ENCODE measurements at regions of chr11 and their contacts with region 1.

Region 1: DNA sequence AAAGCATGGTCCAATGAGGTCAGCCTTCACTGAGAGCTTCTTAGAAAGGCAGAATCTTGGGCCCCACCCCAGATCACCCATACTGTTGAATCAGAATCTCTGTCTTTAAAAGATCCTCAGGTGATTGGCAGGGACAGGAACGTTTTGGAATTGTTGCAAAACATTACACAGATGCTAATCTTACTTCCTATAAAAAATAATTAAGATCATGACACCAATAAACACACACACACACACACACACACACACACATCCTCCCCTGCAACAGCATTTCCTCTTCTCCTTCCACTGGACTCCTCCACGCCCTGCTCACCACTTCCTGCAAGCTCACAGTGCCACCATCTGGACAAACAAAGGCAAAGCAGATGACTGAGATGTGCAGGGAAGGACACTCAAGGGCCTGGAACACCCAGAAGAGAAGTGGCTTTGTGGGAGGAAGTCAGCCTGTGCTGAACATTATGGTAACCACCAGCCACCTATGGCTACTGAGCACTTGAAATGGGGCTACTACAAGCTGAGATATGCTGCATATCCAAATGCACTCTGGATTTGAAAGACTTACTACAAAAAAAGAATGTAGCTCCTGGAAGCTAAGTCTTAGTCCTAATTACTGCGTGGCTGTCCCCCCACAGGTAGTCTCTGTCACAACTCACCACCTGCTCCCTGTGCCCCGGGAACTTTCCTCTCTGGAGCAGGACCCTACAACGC is 65.6 kb downstream of the BTG4 start:
- DNase-seq: peak; percentile 83 to 90 (median 87)
- H3K4me3 ChIP-seq: no peak overlapping the region
- H3K4me3 Mint-ChIP-seq: peak overlapping the region in 4 of 8 donors; percentile 17 to 75 (median 42)
- H3K27ac ChIP-seq: no peak overlapping the region
- H3K27ac Mint-ChIP-seq: peak overlapping the region; percentile 48 to 95 (median 88)
- H3K4me1 ChIP-seq: peaks cover 18% of the 10 kb centered on the region
- H3K4me1 Mint-ChIP-seq: peaks cover 11 to 20% (median 16%) of the 10 kb centered on the region in 4 donors
- H3K27me3 ChIP-seq: no peaks in the 10 kb centered on the region
- H3K27me3 Mint-ChIP-seq: no peaks in the 10 kb centered on the region

Region 2: DNA sequence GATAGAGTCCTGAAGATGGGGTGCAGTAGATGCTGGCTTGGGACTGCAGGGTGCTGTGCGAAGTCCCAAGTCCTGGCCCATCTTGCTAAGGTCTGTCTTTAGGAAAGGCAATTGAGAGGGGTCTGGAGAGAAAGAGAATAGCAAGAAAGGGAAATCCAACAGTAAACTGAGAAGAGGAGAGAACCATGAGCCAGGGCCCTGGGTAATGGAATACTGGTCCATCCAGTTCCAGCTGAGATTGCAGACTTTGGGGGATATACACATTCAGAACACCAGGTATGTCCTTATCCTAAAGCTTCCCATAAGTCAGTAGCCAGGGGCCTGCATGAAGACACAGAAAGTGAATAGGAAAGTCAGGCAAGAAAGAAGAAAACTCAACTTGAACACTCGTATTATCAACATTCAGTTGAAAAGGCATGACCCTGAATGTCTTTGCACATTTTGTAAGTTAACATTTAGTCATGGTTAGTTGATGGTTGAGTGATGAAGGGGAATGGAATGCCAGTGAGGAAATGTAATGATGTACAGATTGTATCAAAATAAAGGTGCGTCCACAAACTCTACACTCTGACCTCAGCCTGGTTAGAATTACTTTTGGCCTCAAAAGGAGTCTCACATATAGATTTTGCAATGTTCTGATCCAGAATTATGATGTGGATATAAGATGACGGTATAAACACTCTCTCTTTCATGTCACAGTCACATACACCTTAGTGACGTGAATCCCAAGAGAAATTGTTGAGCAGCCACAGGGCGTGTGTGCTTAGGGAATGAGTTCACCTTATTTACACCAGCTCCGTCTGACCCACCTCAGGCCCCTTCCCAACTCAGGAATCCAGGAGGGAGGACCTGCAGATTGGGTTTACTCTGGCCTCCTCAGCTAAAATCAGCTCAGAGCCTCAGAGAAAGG is 1250.5 kb before region 1 on chr11:
- CTCF ChIA-PET with region 1: no interaction called
- POLR2A ChIA-PET with region 1: no interaction called
- intact Hi-C with region 1: loop called (anchors 10 kb)
- DNase-seq: no peak
- H3K4me3 ChIP-seq: no peak overlapping the region
- H3K4me3 Mint-ChIP-seq: no peak overlapping the region
- H3K27ac ChIP-seq: no peak overlapping the region
- H3K27ac Mint-ChIP-seq: no peak overlapping the region
- H3K4me1 ChIP-seq: peaks cover 12% of the 10 kb centered on the region
- H3K4me1 Mint-ChIP-seq: peaks cover 10 to 19% (median 12%) of the 10 kb centered on the region in 4 donors
- H3K27me3 ChIP-seq: no peaks in the 10 kb centered on the region
- H3K27me3 Mint-ChIP-seq: no peaks in the 10 kb centered on the region

Region 3: DNA sequence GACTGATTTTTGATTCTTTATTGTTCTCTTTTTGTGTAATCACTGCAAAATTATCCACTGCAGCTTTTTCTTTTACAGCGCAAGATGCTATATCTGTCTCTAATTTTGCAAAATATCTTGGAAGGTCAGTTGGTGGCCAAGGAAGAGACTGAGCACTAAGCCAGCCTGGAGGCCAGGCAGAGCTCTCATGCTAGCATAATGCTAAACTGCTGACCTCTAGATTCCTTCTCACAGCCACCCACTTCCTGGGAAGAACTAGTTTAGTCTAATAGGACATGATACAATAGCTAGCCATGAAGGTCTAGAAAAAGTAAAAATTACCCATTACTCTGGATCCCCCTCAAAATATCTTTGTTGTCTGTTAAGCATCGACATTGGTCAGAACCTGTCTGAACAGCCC is 507.1 kb before region 1 on chr11:
- CTCF ChIA-PET with region 1: no interaction called
- POLR2A ChIA-PET with region 1: no interaction called
- intact Hi-C with region 1: no loop called
- DNase-seq: no peak
- H3K4me3 ChIP-seq: no peak overlapping the region
- H3K4me3 Mint-ChIP-seq: no peak overlapping the region
- H3K27ac ChIP-seq: no peak overlapping the region
- H3K27ac Mint-ChIP-seq: no peak overlapping the region
- H3K4me1 ChIP-seq: no peaks in the 10 kb centered on the region
- H3K4me1 Mint-ChIP-seq: no peaks in the 10 kb centered on the region
- H3K27me3 ChIP-seq: no peaks in the 10 kb centered on the region
- H3K27me3 Mint-ChIP-seq: no peaks in the 10 kb centered on the region

Region 4: DNA sequence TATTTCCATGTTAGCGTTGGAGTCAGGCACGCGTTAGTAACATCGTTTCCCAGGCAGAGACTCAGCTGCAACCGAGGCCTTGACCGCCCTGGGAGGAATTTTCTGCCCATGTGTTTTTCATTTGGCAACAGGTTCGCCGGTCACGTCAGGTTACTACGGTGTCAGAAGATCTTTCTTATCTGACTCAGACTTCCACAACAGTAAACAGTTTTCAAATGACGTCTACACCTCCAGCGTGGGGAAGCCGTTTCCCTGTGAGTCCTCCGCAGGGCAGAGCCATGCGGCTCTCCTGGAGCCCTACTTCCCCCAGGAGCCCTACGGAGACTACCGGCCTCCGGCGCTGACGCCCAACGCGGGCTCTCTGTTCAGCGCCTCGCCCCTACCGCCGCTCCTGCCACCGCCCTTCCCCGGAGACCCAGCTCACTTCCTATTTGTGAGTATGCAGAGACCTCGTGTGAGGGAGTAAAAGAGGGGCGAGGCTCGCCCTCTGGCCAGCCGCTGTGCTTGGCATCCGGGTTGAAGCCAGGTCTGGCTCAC is 162.5 kb before region 1 on chr11:
- CTCF ChIA-PET with region 1: interaction called, 136 read pairs
- POLR2A ChIA-PET with region 1: interaction called, 8 read pairs
- intact Hi-C with region 1: loop called (anchors 1 kb)
- DNase-seq: no peak
- H3K4me3 ChIP-seq: no peak overlapping the region
- H3K4me3 Mint-ChIP-seq: no peak overlapping the region
- H3K27ac ChIP-seq: no peak overlapping the region
- H3K27ac Mint-ChIP-seq: peak overlapping the region in 2 of 7 donors; percentile 5 to 53
- H3K4me1 ChIP-seq: no peaks in the 10 kb centered on the region
- H3K4me1 Mint-ChIP-seq: no peaks in the 10 kb centered on the region
- H3K27me3 ChIP-seq: no peaks in the 10 kb centered on the region
- H3K27me3 Mint-ChIP-seq: peaks cover 0 to 1% of the 10 kb centered on the region in 2 donors

Region 5: GRCh38 chr11:111378861-111379601 is 67.5 kb before region 1 on chr11 and contains the start of gene POU2AF1:
- CTCF ChIA-PET with region 1: interaction called, 7 read pairs
- POLR2A ChIA-PET with region 1: no interaction called
- intact Hi-C with region 1: loop called (anchors 5 kb)
- DNase-seq: peak; percentile 69 to 79 (median 71)
- H3K4me3 ChIP-seq: peak within 1 kb of the TSS in 1 of 2 donors; percentile 46
- H3K4me3 Mint-ChIP-seq: peak within 1 kb of the TSS; percentile 77 to 91 (median 87)
- H3K27ac ChIP-seq: peak within 1 kb of the TSS; percentile 27
- H3K27ac Mint-ChIP-seq: peak within 1 kb of the TSS; percentile 86 to 99 (median 94)
- H3K4me1 ChIP-seq: peaks cover 24% of the 10 kb centered on the region
- H3K4me1 Mint-ChIP-seq: peaks cover 14 to 30% (median 24%) of the 10 kb centered on the region in 4 donors
- H3K27me3 ChIP-seq: no peaks in the 10 kb centered on the region
- H3K27me3 Mint-ChIP-seq: no peaks in the 10 kb centered on the region
- total RNA-seq, gene POU2AF1: 0.47 to 0.64 TPM

Region 6: GRCh38 chr11:111435046-111435698 is 11.4 kb before region 1 on chr11:
- CTCF ChIA-PET with region 1: interaction called, 38 read pairs
- POLR2A ChIA-PET with region 1: interaction called, 5 read pairs
- intact Hi-C with region 1: loop called (anchors 1 kb)
- DNase-seq: no peak
- H3K4me3 ChIP-seq: no peak overlapping the region
- H3K4me3 Mint-ChIP-seq: peak overlapping the region in 1 of 8 donors; percentile 10
- H3K27ac ChIP-seq: no peak overlapping the region
- H3K27ac Mint-ChIP-seq: no peak overlapping the region
- H3K4me1 ChIP-seq: peaks cover 11% of the 10 kb centered on the region
- H3K4me1 Mint-ChIP-seq: peaks cover 4 to 9% (median 6%) of the 10 kb centered on the region in 4 donors
- H3K27me3 ChIP-seq: no peaks in the 10 kb centered on the region
- H3K27me3 Mint-ChIP-seq: peaks cover 4 to 6% of the 10 kb centered on the region in 2 donors

Region 7: DNA sequence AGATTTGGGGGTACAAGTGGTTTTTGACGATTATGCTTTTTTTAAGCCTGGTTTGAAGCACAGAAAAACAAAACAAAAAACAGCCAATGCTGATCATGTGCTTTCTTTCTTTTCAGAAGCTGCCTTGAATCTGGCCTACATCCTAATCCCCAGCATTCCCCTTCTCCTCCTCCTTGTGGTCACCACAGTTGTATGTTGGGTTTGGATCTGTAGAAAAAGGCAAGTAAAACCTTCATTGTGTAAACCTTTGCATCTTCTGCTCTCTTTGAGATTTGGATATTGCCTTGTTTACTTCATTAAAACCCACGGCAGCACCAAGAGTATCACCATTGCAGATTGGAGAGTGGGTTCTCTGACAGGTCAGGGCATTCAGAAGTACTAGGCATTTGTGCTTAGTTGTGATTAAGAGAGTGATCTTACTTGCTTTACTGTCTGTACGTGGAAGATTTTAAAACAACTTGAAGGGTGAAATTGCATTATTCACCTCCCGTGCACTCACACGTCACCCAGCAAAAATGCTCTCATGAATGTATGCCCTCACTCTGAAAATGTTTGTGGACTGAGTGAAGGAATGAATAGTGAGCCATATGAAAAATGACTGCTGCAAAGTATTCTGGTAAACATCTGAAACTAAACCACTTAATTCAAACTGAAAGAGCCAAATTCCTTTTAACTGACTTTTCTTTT is 111.0 kb after region 1 on chr11:
- CTCF ChIA-PET with region 1: no interaction called
- POLR2A ChIA-PET with region 1: no interaction called
- intact Hi-C with region 1: no loop called
- DNase-seq: no peak
- H3K4me3 ChIP-seq: no peak overlapping the region
- H3K4me3 Mint-ChIP-seq: no peak overlapping the region
- H3K27ac ChIP-seq: no peak overlapping the region
- H3K27ac Mint-ChIP-seq: no peak overlapping the region
- H3K4me1 ChIP-seq: no peaks in the 10 kb centered on the region
- H3K4me1 Mint-ChIP-seq: no peaks in the 10 kb centered on the region
- H3K27me3 ChIP-seq: no peaks in the 10 kb centered on the region
- H3K27me3 Mint-ChIP-seq: peaks cover 2 to 5% of the 10 kb centered on the region in 2 donors